K562 (cell line): ENCODE measurements at regions of chr1 and their contacts with region 1.

Region 1: DNA sequence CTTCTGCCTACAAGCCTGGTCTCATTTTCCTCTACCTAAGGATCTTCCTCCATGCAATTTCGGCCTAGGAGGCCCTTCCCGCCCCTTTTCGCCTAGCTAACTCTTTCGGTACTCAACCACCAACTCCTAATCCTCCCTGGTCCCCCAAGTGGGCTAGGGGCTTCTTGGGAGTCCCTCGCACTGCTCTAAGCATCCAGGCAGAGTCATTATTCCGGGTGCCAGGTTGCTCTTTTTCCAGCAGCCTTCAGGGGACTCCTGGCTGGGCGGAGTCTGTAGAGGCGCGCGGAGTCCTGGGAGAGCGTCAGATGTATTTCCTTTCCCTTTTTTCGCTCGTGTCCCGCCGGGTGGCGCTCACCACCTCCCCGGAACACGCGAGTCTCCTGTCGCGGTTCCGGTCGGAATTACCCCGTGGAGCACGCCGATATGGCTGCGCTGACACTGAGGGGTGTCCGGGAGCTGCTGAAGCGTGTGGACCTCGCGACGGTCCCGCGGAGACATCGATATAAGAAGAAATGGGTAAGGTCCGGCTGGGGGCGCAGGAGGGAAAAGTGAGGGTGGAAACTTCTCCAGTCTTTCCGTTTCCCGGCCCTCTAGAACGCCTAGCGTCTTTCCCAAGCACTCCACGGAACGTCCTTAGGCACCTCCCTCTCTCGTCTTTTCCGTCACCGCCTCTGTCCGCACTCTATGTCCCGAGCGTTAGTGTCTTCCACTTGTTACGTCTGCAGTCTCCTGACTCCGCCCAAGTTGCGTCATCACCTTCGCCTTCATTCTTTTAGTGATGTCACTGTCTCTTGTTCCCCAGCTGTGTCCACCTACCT is at the start of gene NSUN4:
- DNase-seq: peak; percentile 91 to 98 (median 92)
- ATAC-seq: peak; percentile 93
- H3K4me3 ChIP-seq: peak within 1 kb of the TSS; percentile 56
- H3K27ac ChIP-seq: peak within 1 kb of the TSS; percentile 96
- H3K4me1 ChIP-seq: peaks cover 22 to 26% of the 10 kb centered on the region in 2 experiments
- H3K27me3 ChIP-seq: no peaks in the 10 kb centered on the region
- CTCF ChIP-seq: peak; percentile 91 to 97 (median 92)
- EP300 ChIP-seq: peak; percentile 55
- POLR2A ChIP-seq: peak; percentile 98
- RAD21 ChIP-seq: peak; percentile 38 to 43
- polyA plus RNA-seq, gene NSUN4: 47.3 to 54.9 TPM

Region 2: DNA sequence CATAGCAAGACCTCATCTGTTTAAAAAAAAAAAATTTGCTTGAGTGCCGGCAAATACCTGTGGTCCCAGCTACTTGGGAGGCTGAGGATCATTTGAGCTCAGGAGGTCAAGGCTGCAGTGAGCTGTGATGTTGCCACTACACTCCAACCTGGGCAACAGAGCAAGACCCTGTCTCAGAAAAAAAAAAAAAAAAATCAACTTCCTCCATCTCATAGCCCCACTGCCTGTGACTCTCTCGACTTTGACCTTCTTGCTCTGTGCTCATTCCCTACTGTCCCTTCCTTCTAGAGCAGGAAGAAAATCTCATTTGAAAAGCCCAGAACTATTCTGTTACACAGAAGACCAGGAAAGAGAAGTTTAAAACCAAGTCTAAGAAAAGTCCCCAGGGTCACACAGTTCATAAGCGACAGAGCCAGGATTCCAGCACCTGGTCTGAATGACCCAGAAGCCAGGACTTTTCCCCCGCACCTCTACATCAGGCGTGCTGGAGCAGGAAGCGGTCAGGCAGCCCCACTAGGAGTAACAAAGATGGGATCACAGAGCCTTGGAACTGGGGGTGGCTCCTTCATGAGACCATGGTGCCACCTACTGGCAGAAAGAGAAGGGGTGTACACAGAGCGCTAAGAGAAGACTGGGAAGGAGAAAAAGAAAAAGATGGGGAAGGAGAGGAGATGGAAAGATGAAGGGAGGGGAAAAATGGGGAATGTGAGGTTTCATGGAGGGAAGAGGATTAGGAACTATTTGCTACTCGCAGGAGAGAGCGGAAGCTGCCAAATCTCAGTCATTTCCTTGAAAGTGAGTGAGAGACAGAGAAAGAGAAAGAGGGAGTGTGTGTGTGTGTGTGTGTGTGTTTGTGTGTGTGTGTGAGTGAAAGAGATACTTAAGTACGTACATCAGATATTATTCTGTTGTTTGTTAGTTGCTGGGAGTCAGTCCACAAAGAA is 161.2 kb before region 1 on chr1:
- CTCF ChIA-PET with region 1: no interaction called
- POLR2A ChIA-PET with region 1: interaction called, 3 read pairs
- in situ Hi-C with region 1: no loop called
- intact Hi-C with region 1: loop called (anchors 5 kb)
- DNase-seq: peak; percentile 91 to 92 (median 92)
- ATAC-seq: peak; percentile 95
- H3K4me3 ChIP-seq: no peak overlapping the region
- H3K27ac ChIP-seq: no peak overlapping the region
- H3K4me1 ChIP-seq: peaks cover 22 to 23% of the 10 kb centered on the region in 2 experiments
- H3K27me3 ChIP-seq: no peaks in the 10 kb centered on the region
- CTCF ChIP-seq: peak; percentile 95 to 98 (median 96)
- EP300 ChIP-seq: no peak
- POLR2A ChIP-seq: no peak
- RAD21 ChIP-seq: peak; percentile 100

Region 3: DNA sequence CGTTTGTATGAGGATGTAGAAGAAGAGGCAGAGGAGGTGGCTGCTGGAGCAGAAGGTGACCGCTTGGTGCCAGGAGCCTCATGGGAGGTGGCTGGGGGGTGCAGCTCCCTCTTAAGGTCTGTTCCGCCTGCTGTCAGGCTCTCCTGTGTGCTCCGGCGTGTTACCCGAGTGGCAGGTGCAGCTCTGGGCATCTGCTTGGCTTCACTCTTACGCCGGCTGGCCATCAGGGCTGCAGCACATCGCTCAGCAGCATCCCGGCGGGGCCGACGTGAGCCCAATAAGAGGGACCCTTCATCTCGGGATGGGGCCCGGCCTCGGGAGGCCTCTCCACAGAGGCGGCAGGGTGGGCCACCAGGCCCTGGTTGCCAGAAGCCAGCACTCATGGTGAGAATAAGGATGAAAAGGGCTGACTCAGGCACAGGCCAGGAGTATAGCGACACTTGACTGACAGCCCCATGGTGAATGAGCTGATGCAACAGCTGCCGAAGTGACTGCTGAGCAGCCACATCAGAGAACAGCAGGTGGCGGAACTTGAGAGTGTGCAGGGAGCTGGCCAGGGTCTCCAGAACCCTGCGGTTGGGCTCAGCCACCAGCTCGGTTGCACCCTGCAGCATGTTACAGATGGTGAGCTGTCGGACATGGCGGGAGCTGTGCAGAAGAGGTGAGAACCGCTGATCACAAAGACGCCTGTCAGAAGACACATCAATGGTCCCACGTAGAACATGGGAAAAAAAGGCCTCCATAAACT is 54.7 kb before region 1 on chr1:
- CTCF ChIA-PET with region 1: no interaction called
- POLR2A ChIA-PET with region 1: interaction called, 7 read pairs
- in situ Hi-C with region 1: no loop called
- intact Hi-C with region 1: loop called (anchors 10 kb)
- DNase-seq: peak in 2 of 4 experiments; percentile 42 to 57
- ATAC-seq: peak; percentile 80
- H3K4me3 ChIP-seq: no peak overlapping the region
- H3K27ac ChIP-seq: no peak overlapping the region; the same call in 2 of the 3 replicates
- H3K4me1 ChIP-seq: peaks cover 23 to 33% of the 10 kb centered on the region in 2 experiments; a peak in 3 of 5 replicates
- H3K27me3 ChIP-seq: no peaks in the 10 kb centered on the region
- CTCF ChIP-seq: peak in 2 of 3 experiments; percentile 12 to 39; a peak in 2 of 6 replicates
- EP300 ChIP-seq: peak; percentile 66
- POLR2A ChIP-seq: peak; percentile 38; the same call in 1 of the 2 replicates
- RAD21 ChIP-seq: peak; percentile 21 to 55

Region 4: GRCh38 chr1:46315669-46316403 is 24.8 kb before region 1 on chr1:
- CTCF ChIA-PET with region 1: no interaction called
- POLR2A ChIA-PET with region 1: interaction called, 20 read pairs
- in situ Hi-C with region 1: no loop called
- intact Hi-C with region 1: no loop called
- DNase-seq: peak in 1 of 4 experiments; percentile 5
- ATAC-seq: peak; percentile 44
- H3K4me3 ChIP-seq: no peak overlapping the region
- H3K27ac ChIP-seq: peak overlapping the region; percentile 4; the same call in 1 of the 3 replicates
- H3K4me1 ChIP-seq: no peaks in the 10 kb centered on the region; a peak in 2 of 5 replicates
- H3K27me3 ChIP-seq: no peaks in the 10 kb centered on the region
- CTCF ChIP-seq: no peak
- EP300 ChIP-seq: no peak
- POLR2A ChIP-seq: peak; percentile 60
- RAD21 ChIP-seq: no peak

Region 5: GRCh38 chr1:46364612-46365011 is 24.0 kb after region 1 on chr1:
- CTCF ChIA-PET with region 1: no interaction called
- POLR2A ChIA-PET with region 1: interaction called, 11 read pairs
- in situ Hi-C with region 1: no loop called
- intact Hi-C with region 1: no loop called
- DNase-seq: no peak
- ATAC-seq: no peak
- H3K4me3 ChIP-seq: no peak overlapping the region
- H3K27ac ChIP-seq: no peak overlapping the region
- H3K4me1 ChIP-seq: peaks cover 0 to 8% of the 10 kb centered on the region in 2 experiments; a peak in 3 of 5 replicates
- H3K27me3 ChIP-seq: no peaks in the 10 kb centered on the region
- CTCF ChIP-seq: no peak
- EP300 ChIP-seq: no peak
- POLR2A ChIP-seq: no peak
- RAD21 ChIP-seq: no peak